ENCODE measurements at regions of chr14 and their contacts with region 1.

Region 1: GRCh38 chr14:47651337-47651736 is 24.1 kb downstream of the MDGA2 start:
- DNase-seq: no peak
- H3K4me3 ChIP-seq: no peak overlapping the region
- CTCF ChIP-seq: no peak
- POLR2A ChIP-seq: no peak

Region 2: DNA sequence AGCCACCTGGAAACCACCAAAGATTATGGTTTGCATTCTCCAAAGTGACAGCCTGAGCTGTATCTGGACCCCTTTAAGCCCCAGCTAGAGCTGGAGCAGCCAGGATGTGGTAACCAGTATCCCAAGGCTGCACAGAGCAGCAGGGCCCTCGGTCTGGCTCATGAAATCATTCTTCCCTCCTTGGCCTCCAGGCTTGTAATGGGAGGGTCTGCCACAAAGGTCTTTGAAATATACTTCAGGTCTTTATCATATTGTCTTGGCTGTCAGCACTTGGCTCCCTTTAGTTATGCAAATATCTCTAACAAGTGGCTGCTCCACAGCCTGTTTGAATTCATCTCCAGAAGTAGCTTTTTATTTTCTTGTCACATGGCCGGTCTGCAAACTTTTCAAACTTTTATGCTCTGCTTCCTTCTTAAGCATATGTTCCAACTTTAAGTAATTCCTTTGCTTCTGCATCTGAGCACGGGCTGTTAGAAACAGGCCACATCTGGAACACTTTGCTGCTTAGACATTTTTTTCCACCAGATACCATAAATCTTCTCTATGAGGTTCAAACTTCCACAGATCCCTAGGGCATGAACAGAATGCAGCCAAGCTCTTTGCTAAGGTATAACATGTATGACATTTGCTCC is 1734.9 kb before region 1 on chr14:
- intact Hi-C with region 1: loop called (anchors 5 kb)
- DNase-seq: no peak
- H3K4me3 ChIP-seq: no peak overlapping the region
- CTCF ChIP-seq: no peak
- POLR2A ChIP-seq: no peak

Region 3: DNA sequence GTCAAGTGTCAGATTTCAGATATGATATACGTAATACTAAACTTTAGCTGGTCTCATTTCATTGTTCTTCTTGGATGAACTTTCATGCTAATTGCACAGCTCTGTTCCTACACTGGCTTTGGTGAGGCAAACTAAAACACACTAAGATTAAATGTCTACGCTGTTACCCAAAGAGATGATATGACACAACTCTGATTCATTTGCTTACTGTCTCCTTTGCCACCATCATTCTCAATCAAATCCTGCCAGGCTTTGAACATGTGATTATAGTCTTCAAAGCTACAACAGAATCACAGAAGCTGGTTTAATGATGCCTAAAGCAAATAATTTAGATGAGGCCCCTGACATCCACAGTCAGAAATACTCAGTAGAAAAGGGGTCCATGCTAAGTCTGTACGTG is 13.6 kb before region 1 on chr14:
- intact Hi-C with region 1: no loop called
- DNase-seq: no peak
- H3K4me3 ChIP-seq: no peak overlapping the region
- CTCF ChIP-seq: no peak
- POLR2A ChIP-seq: no peak

Region 4: DNA sequence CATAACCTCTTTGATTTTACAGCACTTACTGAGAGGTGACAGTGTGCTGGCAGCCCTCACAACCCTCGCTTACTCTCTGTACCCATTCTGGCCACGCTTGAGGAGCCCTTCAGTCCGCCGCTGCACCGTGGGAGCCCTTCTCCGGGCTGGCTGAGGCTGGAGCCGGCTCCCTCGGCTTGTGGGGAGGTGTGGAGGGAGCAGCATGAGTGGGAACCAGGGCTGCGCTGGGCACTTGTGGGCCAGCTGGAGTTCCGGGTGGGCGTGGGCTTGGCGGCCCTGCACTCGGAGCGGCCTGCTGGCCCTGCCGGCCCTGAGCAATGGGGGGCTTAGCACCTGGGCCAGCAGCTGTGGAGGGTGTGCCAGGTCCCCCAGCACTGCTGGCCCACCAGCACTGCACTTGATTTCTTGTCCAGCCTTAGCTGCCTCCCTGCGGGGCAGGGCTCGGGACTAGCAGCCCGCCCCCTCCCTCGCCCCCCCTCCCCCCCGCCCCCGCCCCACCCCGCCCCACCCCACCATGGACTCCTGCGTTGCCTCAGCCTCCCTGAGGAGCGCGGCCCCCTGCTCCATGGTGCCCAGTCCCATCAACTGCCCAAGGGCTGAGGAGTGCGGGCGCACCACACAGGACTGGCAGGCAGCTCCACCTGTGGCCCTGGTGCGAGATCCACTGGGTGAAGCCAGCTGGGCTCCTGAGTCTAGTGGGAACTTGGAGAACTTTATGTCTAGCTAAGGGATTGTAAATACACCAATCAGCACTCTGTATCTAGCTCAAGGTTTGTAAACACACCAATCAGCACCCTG is 14.2 kb after region 1 on chr14:
- intact Hi-C with region 1: no loop called
- DNase-seq: no peak
- H3K4me3 ChIP-seq: no peak overlapping the region
- CTCF ChIP-seq: no peak
- POLR2A ChIP-seq: no peak

Region 5: GRCh38 chr14:48536313-48536712 is 885.0 kb after region 1 on chr14:
- intact Hi-C with region 1: loop called (anchors 10 kb)
- DNase-seq: no peak
- H3K4me3 ChIP-seq: no peak overlapping the region
- CTCF ChIP-seq: no peak
- POLR2A ChIP-seq: no peak

Region 6: GRCh38 chr14:48936362-48936761 is 1285.0 kb after region 1 on chr14:
- intact Hi-C with region 1: no loop called
- DNase-seq: no peak
- H3K4me3 ChIP-seq: no peak overlapping the region
- CTCF ChIP-seq: no peak
- POLR2A ChIP-seq: no peak